ENCODE measurements at regions of chr9 and their contacts with region 1.

Region 1: GRCh38 chr9:92634712-92635605 is 35.0 kb downstream of the IPPK start:
- DNase-seq: peak; percentile 78
- H3K4me3 ChIP-seq: no peak overlapping the region
- H3K27ac ChIP-seq: no peak overlapping the region
- H3K4me1 ChIP-seq: no peaks in the 10 kb centered on the region
- H3K27me3 ChIP-seq: no peaks in the 10 kb centered on the region
- CTCF ChIP-seq: peak; percentile 98
- POLR2A ChIP-seq: no peak

Region 2: GRCh38 chr9:92133949-92134604 is 500.9 kb before region 1 on chr9:
- CTCF ChIA-PET with region 1: interaction called, 26 read pairs
- POLR2A ChIA-PET with region 1: no interaction called
- dilution Hi-C with region 1: no loop called
- intact Hi-C with region 1: loop called (anchors 1 kb)
- DNase-seq: peak; percentile 80
- H3K4me3 ChIP-seq: peak overlapping the region in 1 of 3 experiments; percentile 8
- H3K27ac ChIP-seq: peak overlapping the region; percentile 32
- H3K4me1 ChIP-seq: peaks cover 5% of the 10 kb centered on the region
- H3K27me3 ChIP-seq: no peaks in the 10 kb centered on the region
- CTCF ChIP-seq: peak; percentile 91 to 97
- POLR2A ChIP-seq: no peak

Region 3: DNA sequence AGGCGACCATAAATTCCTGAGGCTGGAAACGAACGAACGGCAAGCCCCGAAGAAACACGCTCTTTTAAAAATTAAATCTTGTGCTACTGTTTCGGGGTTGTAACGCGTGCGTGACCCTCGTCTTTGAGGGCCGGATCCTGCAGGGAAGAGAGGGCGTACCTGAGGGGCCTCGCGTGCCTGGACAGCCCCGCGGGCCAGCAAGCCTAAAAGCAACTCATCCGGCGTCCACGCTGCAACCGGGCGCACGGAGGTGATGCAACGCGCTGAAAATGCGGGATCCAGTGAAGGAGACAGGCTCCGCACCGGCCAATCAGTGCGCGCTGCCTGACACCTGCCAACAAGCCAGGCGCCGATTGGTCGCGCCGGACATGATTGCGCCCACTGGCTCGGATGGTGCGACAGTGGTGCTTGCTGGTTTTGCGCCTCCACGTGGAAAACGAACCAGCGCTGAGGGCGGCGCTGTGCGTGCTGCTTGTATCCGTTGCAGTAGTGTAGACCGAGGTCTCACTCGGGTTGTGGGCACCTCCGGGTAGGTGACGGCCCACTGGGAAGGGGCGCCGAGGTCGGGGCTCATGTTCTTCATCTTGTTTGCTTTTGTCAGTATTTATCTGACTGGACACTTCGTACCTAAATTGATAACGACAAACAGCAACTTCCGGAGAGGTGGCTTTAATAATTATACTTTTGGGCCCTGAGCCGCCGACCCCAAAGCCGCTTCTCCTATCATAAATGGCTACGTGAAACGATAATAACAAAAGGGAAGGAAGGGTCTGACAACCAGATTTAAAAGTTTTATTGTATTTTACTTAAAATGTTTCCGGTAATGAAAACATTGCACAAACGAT is 341.3 kb before region 1 on chr9 and contains the start of gene IARS1:
- CTCF ChIA-PET with region 1: no interaction called
- POLR2A ChIA-PET with region 1: no interaction called
- dilution Hi-C with region 1: no loop called
- intact Hi-C with region 1: loop called (anchors 2 kb)
- DNase-seq: peak; percentile 99
- H3K4me3 ChIP-seq: peak within 1 kb of the TSS; percentile 76 to 98 (median 78)
- H3K27ac ChIP-seq: peak within 1 kb of the TSS; percentile 64
- H3K4me1 ChIP-seq: peaks cover 23% of the 10 kb centered on the region
- H3K27me3 ChIP-seq: no peaks in the 10 kb centered on the region
- CTCF ChIP-seq: peak in 1 of 2 donors; percentile 40
- POLR2A ChIP-seq: peak; percentile 97
- total RNA-seq, gene IARS1: 130 and 132 TPM in 2 replicates

Region 4: GRCh38 chr9:92342825-92343488 is 292.0 kb before region 1 on chr9:
- CTCF ChIA-PET with region 1: interaction called, 13 read pairs
- POLR2A ChIA-PET with region 1: no interaction called
- dilution Hi-C with region 1: no loop called
- intact Hi-C with region 1: loop called (anchors 5 kb)
- DNase-seq: peak; percentile 6
- H3K4me3 ChIP-seq: no peak overlapping the region
- H3K27ac ChIP-seq: no peak overlapping the region
- H3K4me1 ChIP-seq: no peaks in the 10 kb centered on the region
- H3K27me3 ChIP-seq: no peaks in the 10 kb centered on the region
- CTCF ChIP-seq: no peak
- POLR2A ChIP-seq: no peak

Region 5: DNA sequence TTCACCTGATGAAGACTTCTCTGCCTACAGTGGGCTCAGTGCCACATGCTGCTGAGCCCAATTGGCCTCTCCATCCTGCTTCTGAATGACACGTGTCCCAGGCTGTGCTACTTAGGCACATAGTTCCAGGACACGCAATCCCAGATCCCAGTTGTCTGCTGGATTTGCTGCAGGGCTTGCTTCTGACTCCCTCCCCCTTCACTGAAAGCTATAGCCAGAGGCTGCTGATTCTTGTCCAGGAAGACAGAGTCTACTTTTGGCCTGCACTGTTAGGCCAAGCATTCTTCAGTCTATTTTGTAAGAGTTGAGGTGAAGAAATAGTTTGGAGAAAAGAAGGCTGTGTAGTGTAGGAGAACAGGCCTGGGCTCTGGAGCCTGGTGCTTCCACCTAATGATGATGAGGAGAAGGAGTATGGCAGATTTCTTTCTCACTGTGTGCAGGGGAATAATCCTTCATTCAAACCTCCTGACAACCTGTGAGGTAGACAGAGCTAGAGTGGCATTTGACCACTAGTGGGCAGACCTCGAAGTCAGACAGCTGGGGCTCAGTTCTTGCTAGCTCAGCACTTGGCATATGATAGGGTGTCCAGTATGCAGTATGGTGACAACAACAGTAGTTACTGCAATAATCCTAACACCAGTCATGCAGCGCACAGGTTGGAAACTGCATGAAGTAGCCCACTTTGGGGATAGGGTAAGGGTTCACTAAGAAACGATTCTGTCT is 133.1 kb before region 1 on chr9:
- CTCF ChIA-PET with region 1: interaction called, 5 read pairs
- POLR2A ChIA-PET with region 1: no interaction called
- dilution Hi-C with region 1: no loop called
- intact Hi-C with region 1: loop called (anchors 1 kb)
- DNase-seq: peak; percentile 45
- H3K4me3 ChIP-seq: no peak overlapping the region
- H3K27ac ChIP-seq: no peak overlapping the region
- H3K4me1 ChIP-seq: no peaks in the 10 kb centered on the region
- H3K27me3 ChIP-seq: no peaks in the 10 kb centered on the region
- CTCF ChIP-seq: peak; percentile 64 to 69
- POLR2A ChIP-seq: no peak

Region 6: DNA sequence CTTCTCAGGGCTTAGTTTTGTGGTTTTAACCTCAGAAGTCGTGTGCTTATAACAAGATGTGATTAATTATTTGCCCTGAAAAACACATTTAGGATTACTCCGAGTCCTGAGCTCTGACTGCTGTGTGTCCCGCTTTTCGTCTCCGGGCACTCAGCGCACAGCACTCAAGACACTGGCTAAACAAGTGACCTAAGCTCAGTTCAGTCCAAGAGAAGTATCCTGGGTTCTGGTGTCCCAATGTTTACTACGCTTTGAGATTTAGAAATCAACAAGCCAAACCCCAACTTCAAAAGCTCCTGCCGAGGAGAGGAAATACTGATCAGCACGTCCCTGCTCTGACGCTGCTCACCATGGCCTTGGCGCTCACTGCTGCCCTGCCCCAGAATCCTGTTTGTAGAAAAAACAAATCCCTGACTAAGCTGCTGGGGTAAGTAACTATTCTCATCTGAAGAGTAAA is 18.3 kb before region 1 on chr9:
- CTCF ChIA-PET with region 1: no interaction called
- POLR2A ChIA-PET with region 1: no interaction called
- dilution Hi-C with region 1: no loop called
- intact Hi-C with region 1: no loop called
- DNase-seq: no peak
- H3K4me3 ChIP-seq: no peak overlapping the region
- H3K27ac ChIP-seq: no peak overlapping the region
- H3K4me1 ChIP-seq: no peaks in the 10 kb centered on the region
- H3K27me3 ChIP-seq: no peaks in the 10 kb centered on the region
- CTCF ChIP-seq: no peak
- POLR2A ChIP-seq: no peak

Region 7: DNA sequence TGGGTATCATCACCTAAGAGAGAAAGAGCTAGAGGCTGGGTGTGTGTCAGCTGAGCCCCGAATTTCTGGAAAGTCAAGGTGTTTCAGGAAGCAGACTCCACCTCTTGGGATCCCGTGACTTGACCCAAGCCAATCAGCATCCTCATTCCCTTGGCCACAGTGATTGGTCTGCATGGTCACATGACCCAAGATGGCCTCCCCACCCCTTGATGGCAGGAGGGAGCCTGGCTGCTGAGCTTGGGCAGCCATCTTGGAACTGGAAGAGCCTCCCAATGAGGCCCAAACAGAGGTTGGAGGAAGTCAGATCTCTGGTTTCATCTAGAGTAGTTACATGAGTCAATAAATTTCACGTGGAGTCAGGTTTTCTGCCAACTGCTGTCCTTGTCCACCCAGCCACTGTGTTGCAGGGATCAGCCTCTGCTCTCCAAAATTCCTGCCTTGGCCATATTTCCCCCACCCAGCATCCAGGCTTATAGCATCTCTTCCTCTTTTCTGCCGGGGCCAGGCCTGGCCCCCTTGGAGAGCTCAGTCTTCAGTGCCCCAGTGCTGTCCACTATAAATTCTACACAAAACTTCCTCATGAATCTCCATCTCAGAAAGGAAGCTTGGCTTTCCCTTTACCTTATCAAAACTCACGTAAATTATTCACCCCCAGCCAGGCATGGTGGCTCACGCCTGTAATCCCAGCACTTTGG is 406.3 kb after region 1 on chr9:
- CTCF ChIA-PET with region 1: no interaction called
- POLR2A ChIA-PET with region 1: no interaction called
- dilution Hi-C with region 1: no loop called
- intact Hi-C with region 1: no loop called
- DNase-seq: no peak
- H3K4me3 ChIP-seq: no peak overlapping the region
- H3K27ac ChIP-seq: no peak overlapping the region
- H3K4me1 ChIP-seq: no peaks in the 10 kb centered on the region
- H3K27me3 ChIP-seq: no peaks in the 10 kb centered on the region
- CTCF ChIP-seq: no peak
- POLR2A ChIP-seq: no peak

Measured in endothelial cell of umbilical vein (primary cell).